Left cardiac atrium (tissue), 4 donors: ENCODE measurements at regions of chr3 and their contacts with region 1.

Region 1: DNA sequence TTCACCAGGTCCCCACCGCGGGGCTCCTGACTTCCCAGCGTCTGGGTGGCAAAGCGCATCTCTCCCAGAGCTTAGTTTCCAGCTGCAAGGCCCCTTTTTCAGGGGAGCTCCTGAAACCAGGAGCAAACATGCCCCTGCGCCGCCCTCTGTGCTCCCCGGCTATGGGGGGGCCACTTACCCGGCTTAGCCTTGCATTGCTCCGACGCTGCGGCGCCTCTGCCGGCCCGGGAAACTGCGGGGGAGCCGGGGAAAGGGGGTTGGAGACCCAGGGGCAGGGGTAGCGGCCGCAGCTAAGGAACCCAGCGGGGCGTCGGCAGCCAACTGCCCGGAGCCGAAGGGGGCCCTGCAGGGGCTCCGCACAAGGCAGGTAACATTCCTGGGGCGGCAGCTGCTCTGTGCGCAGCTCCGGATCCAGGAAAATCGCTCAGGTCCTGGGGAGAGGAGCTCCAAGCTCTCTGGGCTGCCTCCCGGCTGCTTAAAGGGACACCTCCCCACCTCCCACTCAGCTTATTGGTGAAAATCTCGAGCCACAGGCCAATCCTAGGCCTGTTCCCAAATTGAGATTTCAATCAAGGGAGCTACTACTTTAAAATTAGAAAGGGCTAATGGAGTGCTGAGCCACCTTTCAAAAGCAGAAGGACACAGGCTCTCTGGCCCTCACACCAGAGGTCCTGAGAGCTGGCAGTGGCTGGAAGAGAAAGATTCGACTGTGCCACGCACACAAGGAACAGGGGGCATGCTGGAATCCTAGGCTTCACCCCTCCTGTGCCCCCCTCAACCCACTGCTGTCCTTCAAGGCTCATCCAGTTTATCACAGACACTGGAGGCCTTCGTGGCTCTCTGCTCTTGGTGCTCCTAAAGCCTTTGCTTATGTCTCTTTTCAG is 42.7 kb upstream of the PRICKLE2 start:
- DNase-seq: peak; percentile 74
- ATAC-seq: peak; percentile 85 to 92

Region 2: DNA sequence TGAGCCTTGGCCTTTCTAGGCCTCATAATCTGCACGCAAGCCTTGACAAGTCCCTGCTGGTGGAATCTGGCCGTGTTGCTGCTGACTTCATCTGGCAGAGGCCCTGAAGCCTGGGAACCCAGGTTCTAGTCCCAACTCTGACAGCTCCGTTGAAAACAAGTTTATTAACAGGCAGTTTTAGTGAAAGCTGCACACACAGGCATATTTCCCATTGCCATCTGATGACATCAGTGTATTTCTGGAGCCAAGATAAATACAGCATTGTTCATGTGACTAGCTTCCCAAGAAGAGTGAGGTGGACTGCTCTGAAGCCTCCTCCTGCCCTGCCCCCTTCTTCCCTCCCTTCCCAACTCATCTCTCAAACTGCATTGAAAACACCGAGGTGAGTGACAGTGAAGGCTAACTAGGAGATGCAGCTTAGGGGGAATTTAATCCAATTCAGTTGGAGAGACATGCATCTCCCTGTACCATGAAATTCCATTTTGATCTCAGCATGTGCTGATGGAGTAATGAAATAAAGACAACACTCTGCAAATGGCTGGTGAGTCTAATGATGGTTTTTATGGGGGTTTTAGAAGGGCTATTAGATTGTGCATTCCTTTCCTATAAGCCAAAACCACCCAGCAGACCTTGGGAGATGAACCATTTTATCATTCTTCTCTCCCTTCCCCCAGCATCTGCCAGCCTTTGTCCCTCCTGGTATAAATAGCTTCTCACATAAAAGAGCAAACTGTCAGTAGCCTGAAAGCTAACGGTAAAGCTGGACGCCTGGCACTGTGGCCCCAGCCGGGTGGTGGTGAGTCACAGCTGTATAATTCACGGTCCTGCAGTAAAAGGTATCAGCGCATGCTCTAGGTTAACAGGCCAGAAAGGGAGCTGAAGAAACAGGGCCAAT is 80.7 kb before region 1 on chr3:
- intact Hi-C with region 1: loop called in 1 of 2 experiments (anchors 10 kb)
- DNase-seq: peak; percentile 71
- ATAC-seq: peak; percentile 75 to 76

Region 3: DNA sequence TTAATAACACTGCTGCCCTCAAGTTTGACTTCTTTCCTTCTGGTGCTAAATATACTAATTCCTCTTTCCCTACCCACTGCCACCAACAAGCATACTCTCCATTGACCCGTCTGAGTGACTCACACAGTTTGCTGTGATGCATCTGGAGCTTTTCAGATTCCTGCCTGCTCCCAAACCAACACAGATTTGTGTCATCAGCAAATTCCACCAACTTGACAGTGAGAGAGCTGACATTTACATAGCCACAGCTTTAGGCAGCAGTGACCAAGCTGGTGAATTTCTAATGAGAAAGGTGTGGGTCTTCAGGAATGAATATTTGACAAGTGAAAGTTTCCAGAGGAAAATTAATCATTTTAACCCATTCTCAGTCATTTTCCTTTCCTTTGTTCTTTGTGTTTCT is 53.8 kb after region 1 on chr3:
- intact Hi-C with region 1: loop called in 1 of 2 experiments (anchors 10 kb)
- DNase-seq: no peak
- ATAC-seq: peak in 1 of 2 donors; percentile 76

Region 4: GRCh38 chr3:64399205-64399800 is 131.3 kb after region 1 on chr3:
- intact Hi-C with region 1: loop called in 1 of 2 experiments (anchors 2 kb)
- DNase-seq: peak; percentile 22
- ATAC-seq: peak; percentile 81 to 84